ENCODE measurements at regions of chr11 and their contacts with region 1.

Region 1: DNA sequence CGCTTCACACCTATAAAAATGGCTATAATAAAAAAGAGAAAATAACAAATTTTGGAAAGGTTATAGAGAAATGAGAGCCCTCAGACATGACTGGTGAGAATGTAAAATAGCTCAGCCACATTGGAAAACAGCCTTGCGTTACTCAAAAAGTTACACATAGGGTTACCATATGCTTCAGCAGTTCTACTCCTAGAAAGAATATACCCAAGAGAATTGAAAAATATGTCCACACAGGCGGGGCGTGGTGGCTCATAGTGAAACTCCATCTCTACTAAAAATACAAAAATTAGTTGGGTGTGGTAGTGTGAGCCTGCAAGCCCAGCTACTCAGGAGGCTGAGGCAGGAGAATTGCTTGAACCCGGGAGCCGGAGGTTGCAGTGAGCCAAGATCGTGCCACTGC is 7.6 kb upstream of the JHY start:
- DNase-seq: no peak

Region 2: GRCh38 chr11:123020968-123021367 is 146.0 kb after region 1 on chr11:
- intact Hi-C with region 1: loop called (anchors 10 kb)
- DNase-seq: peak in 17 of 42 donors; percentile 8 to 53 (median 22)